Common myeloid progenitor, CD34-positive (primary cell): ENCODE measurements at regions of chr1 and their contacts with region 1.

Region 1: DNA sequence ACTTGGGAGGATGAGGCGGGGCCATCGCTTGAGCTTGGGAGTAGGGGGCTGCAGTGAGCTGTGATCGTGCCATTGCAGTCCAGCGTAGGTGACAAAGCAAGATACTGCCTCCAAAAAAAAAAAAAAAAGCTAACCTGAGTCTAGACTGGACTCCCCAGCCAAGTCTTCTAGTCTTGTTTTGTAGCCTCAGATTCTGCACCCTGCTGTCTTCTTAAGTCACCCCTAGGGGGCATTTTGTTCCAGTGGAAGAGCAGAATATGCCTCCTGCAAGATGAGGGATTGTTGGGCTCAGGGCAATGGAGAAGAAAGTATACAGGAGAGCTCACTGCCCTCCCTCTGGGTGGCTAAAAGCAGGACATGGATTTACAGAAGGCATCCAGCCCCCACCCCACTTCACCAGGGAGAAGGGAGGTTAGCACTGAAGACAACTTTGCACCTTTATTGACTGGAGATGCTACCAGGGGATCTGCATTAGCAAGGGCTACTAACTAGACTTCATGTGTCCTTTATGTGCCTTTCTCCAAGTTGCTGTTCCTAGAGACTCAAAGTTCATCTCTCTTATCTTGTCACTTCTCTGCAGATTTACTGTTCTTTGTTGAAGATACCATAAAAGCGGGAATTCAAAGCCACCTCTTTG is 15.3 kb upstream of the RNF187 start:
- DNase-seq: peak; percentile 70 to 81 (median 77)
- H3K4me3 ChIP-seq: no peak overlapping the region
- H3K27ac ChIP-seq: no peak overlapping the region
- H3K4me1 ChIP-seq: peaks cover 0 to 33% (median 11%) of the 10 kb centered on the region in 4 experiments
- H3K27me3 ChIP-seq: peaks cover 7 to 46% (median 20%) of the 10 kb centered on the region in 5 experiments

Region 2: DNA sequence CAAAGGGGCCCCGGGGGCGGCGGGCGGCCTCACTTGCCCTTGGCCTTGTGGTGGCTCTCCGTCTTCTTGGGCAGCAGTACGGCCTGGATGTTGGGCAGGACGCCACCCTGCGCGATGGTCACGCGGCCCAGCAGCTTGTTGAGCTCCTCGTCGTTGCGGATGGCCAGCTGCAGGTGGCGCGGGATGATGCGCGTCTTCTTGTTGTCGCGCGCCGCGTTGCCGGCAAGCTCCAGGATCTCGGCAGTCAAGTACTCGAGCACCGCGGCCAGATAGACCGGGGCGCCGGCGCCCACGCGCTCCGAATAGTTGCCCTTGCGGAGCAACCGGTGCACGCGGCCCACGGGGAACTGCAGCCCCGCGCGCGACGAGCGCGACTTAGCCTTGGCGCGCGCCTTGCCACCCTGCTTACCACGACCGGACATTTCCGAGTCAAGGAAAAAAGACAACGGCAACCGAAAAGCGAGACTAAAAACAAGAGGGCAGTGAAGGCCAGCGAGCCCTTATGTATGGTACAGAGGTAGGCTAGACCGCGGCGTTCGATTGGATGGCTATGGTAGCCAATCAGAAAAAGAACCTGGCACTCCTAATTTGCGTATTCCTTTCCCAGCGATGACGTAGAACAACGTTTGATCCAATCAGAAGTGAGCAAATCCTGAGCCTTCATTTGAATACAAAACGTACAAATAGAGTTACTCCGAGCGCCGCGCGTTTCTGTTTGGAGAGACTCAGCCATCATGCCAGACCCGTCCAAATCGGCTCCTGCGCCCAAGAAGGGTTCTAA is 14.3 kb before region 1 on chr1:
- CTCF ChIA-PET with region 1: interaction called, 21 read pairs
- POLR2A ChIA-PET with region 1: interaction called, 3 read pairs
- DNase-seq: peak; percentile 98 to 99 (median 99)
- H3K4me3 ChIP-seq: peak overlapping the region; percentile 34 to 91 (median 78)
- H3K27ac ChIP-seq: peak overlapping the region; percentile 64 to 86
- H3K4me1 ChIP-seq: peaks cover 10 to 41% (median 28%) of the 10 kb centered on the region in 4 experiments
- H3K27me3 ChIP-seq: peaks cover 0 to 13% (median 3%) of the 10 kb centered on the region in 5 experiments

Region 3: GRCh38 chr1:228486596-228487335 is 14.9 kb after region 1 on chr1:
- CTCF ChIA-PET with region 1: interaction called, 19 read pairs
- POLR2A ChIA-PET with region 1: interaction called, 3 read pairs
- DNase-seq: peak; percentile 82 to 92 (median 85)
- H3K4me3 ChIP-seq: peak overlapping the region; percentile 86 to 99 (median 95)
- H3K27ac ChIP-seq: peak overlapping the region; percentile 100
- H3K4me1 ChIP-seq: peaks cover 0 to 16% (median 14%) of the 10 kb centered on the region in 4 experiments
- H3K27me3 ChIP-seq: no peaks in the 10 kb centered on the region

Region 4: DNA sequence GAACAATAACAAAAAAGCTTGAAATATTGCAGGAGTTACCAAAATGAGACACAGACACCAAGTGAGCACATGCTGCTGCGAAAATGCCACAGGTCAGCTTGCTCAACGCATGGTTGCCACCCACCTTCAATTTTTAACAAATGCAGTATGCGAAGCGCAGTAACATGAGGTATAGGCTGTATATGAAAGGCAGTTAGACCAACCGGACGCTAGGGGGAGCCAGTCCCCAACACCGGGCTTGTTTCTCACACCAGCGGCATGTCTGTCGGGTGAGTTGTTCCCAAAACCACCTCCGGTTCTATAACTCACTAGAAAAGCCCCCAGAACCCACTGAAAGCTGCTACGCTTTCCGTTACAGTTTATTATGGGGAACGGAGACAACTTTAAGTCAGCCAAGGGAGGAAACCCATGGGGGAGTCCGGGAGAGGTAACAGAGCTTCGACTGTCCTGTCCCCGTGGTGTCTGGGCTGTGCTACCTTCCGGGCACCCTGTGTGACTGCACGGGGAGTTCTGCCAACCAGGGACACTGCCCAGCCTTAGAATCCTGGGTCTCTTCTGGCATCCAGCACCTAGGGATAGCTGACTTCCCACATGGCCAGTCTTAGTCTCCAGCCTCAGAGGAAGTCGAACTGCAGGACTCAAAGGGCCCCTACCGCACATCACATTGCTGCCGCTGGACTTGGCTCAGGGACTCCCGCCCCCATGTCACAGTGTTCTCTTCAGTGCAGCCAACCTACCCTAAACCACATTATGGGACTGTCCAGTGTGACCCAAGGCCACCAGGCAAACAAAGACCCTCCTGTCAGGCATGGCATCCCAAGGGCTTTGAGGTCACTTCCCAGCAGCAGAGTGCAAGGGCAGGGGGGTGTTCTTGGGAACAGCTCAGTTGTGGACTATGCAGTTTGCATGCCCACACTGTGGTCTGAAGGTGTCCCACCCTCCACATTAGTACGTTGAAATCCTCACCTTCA is 29.3 kb after region 1 on chr1:
- CTCF ChIA-PET with region 1: interaction called, 19 read pairs
- POLR2A ChIA-PET with region 1: no interaction called
- DNase-seq: peak; percentile 91 to 97 (median 94)
- H3K4me3 ChIP-seq: peak overlapping the region in 4 of 7 experiments; percentile 11 to 83 (median 60)
- H3K27ac ChIP-seq: peak overlapping the region in 1 of 2 experiments; percentile 16
- H3K4me1 ChIP-seq: peaks cover 4 to 22% (median 16%) of the 10 kb centered on the region in 4 experiments
- H3K27me3 ChIP-seq: peaks cover 0 to 2% (median 0%) of the 10 kb centered on the region in 5 experiments

Region 5: DNA sequence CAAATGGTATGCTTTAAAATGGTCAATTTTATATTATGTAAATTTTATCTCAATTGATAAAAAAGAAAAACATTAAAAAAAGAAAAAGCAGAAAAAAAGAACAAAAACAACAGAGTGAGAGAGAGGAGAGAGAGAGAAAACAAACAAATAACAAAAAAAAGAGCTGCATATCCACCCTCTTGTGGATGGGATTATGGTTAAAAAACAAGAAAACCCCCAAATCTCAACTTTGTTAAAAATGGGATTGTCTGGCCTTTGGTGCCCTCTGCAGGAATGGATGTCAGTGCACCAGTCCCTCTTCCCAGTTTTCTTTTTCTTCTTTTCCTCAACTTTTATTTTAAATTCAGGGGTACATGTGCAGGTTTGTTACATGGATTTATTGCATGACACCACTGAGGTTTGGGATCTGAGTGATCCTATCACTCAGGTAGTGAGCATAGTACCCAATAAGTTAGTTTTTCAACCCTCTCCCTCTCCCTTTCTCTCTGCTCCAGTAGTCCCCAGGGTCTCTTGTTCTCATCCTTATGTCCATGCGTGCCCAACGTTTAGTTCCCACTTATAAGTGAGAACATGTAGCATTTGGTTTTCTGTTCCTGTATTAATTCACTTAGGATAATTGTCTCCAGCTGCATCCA is 43.4 kb after region 1 on chr1:
- CTCF ChIA-PET with region 1: interaction called, 44 read pairs
- POLR2A ChIA-PET with region 1: no interaction called
- DNase-seq: peak; percentile 78 to 81 (median 80)
- H3K4me3 ChIP-seq: no peak overlapping the region
- H3K27ac ChIP-seq: no peak overlapping the region
- H3K4me1 ChIP-seq: peaks cover 0 to 25% (median 13%) of the 10 kb centered on the region in 4 experiments
- H3K27me3 ChIP-seq: peaks cover 0 to 25% (median 16%) of the 10 kb centered on the region in 5 experiments

Region 6: DNA sequence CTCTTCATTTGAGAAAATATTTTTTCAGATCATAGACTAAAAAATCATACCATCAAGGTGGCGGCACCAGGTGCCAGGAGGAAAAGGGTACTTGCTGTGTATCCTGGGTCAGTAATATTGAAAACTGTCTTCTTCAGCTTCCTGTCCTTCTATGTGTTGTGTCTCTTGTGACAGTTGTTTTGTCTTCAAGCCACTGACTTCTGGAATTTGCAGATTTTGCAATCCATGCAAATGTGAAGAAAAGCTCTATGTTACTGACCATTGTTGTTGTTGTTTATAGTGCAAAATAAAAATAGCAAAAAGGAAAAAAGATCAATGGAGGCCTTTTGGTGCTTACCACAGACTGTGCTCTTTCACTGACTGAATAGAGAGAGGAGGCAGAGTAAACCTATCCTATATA is 180.2 kb after region 1 on chr1:
- CTCF ChIA-PET with region 1: no interaction called
- POLR2A ChIA-PET with region 1: no interaction called
- DNase-seq: no peak
- H3K4me3 ChIP-seq: no peak overlapping the region
- H3K27ac ChIP-seq: no peak overlapping the region
- H3K4me1 ChIP-seq: peaks cover 0 to 20% (median 13%) of the 10 kb centered on the region in 4 experiments
- H3K27me3 ChIP-seq: peaks cover 23 to 55% (median 50%) of the 10 kb centered on the region in 5 experiments